Activated CD4-positive, alpha-beta memory T cell treated with anti-CD3 and anti-CD28 coated beads, Interleukin-2, amount 10 ng/mL, durations not matched to agents 7 days and 5 days (primary cell): ENCODE measurements at regions of chr3 and their contacts with region 1.

Region 1: GRCh38 chr3:121834696-121835464 is at the starts of genes EAF2 and IQCB1:
- DNase-seq: peak; percentile 97
- H3K4me3 Mint-ChIP-seq: peak within 1 kb of the TSS; percentile 83
- H3K27ac Mint-ChIP-seq: peak within 1 kb of the TSS; percentile 76
- H3K4me1 Mint-ChIP-seq: peaks cover 55% of the 10 kb centered on the region
- H3K27me3 Mint-ChIP-seq: no peaks in the 10 kb centered on the region
- total RNA-seq, gene EAF2: 21.4 to 23.7 TPM
- total RNA-seq, gene IQCB1: 35.3 to 39.1 TPM

Region 2: GRCh38 chr3:121749276-121750086 is 85.4 kb before region 1 on chr3 and contains the start of gene GOLGB1:
- CTCF ChIA-PET with region 1: no interaction called
- POLR2A ChIA-PET with region 1: interaction called, 21 read pairs
- DNase-seq: peak; percentile 96
- H3K4me3 Mint-ChIP-seq: no peak within 1 kb of the TSS
- H3K27ac Mint-ChIP-seq: no peak within 1 kb of the TSS
- H3K4me1 Mint-ChIP-seq: peaks cover 5% of the 10 kb centered on the region
- H3K27me3 Mint-ChIP-seq: peaks cover 11% of the 10 kb centered on the region
- total RNA-seq, gene GOLGB1: 33.6 to 37.8 TPM